GM12878 (cell line): ENCODE measurements at regions of chr10 and their contacts with region 1.

Region 1: DNA sequence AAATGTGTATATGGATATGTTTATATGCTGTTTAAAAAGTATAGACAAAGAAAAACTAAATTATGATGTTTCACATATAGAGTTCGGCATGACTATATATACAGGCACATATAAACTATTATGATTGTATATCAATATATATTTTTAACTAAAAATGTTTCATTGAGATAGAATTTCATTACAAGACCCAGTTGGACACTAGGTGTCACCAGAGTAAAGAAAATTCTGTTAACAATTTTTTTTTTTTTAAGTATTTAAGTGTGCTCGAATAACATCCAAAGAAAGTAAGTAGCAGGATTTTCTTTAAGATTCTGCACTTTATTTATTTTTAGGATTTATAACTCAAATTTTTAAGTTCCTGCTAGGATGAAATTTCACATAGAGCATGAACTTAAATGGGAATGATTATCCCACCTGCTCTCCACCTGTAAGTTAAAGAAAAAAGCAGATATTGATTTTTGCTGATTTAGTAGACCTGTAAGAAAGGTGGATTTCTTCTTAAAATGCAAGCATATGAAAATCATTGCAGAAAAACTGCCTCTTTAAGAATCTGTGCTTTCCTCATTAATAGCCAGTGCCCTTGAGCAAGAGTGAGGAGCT is 961.5 kb downstream of the PCDH15 start:
- DNase-seq: no peak
- ATAC-seq: no peak
- H3K4me3 ChIP-seq: no peak overlapping the region
- H3K27ac ChIP-seq: no peak overlapping the region
- H3K4me1 ChIP-seq: no peaks in the 10 kb centered on the region
- H3K27me3 ChIP-seq: no peaks in the 10 kb centered on the region; a peak in 1 of 4 replicates
- CTCF ChIP-seq: peak in 2 of 3 experiments; percentile 14 to 21; a peak in 3 of 6 replicates
- EP300 ChIP-seq: no peak
- POLR2A ChIP-seq: no peak
- RAD21 ChIP-seq: peak; percentile 24; the same call in 1 of the 2 replicates

Region 2: DNA sequence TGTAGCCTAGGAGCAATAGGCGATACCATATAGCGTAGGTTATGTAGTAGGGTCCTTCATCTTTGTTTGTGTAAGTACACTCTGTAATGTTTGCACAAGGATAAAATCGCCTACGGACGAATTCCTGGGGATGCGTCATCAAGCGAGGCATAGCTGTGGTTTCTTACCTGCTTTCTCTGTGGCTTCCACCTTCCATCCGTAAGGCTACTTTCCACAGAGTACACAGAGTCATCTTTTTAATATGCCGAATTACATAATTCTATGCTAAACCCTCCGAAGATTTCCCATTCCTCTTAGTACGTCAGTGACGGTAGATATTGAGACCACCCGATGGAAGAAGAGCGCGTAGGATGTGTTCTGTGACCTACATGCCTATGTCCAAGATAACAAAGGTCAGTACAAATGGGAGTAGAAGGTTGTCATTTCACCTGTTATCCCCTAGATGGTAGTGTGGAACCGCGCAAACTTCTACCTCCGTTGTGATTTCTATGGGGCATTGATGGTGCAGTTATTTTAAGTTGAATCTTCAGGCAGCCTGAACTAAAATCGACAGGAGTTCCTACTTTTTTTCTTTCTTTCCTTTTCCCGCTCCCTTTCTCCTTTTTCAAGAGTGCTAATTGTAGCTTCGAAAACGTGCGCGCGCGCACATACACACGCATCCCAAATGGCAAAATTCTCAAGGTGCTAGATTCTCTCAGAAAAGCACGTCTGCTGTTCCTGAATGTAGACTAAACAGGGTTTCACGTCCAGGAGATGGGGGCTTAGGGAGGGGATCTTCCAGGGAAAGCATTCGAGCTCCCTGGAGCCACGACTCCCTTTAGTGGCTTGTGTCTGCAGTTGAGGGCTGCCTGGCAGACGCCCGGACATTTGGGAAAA is 955.3 kb before region 1 on chr10:
- CTCF ChIA-PET with region 1: no interaction called
- POLR2A ChIA-PET with region 1: no interaction called
- RAD21 ChIA-PET with region 1: no interaction called
- SMC1A ChIA-PET with region 1: no interaction called
- in situ Hi-C with region 1: no loop called
- intact Hi-C with region 1: loop called (anchors 10 kb)
- DNase-seq: peak; percentile 25
- ATAC-seq: peak; percentile 95
- H3K4me3 ChIP-seq: no peak overlapping the region
- H3K27ac ChIP-seq: no peak overlapping the region
- H3K4me1 ChIP-seq: no peaks in the 10 kb centered on the region
- H3K27me3 ChIP-seq: no peaks in the 10 kb centered on the region; a peak in 1 of 4 replicates
- CTCF ChIP-seq: peak; percentile 78 to 84 (median 83)
- EP300 ChIP-seq: no peak
- POLR2A ChIP-seq: no peak
- RAD21 ChIP-seq: peak; percentile 90

Region 3: DNA sequence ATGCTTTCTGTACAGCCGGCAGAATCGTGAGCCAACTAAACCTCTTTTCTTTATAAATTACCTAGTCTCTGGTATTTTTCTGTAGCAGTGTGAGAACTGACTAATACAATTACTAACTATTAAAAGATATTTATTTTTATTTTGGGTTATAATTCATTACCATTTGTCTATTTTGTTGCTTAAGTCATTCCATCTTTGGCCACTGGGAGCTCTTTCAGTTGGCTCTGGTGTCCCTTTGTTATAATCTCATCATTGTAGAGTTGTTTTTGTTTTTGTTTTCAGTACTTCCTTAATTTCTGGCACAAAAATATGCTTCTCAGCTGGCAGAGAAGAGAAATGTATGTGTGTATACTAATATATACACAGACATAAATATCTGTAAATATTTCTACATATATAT is 259.1 kb before region 1 on chr10:
- CTCF ChIA-PET with region 1: no interaction called
- POLR2A ChIA-PET with region 1: no interaction called
- RAD21 ChIA-PET with region 1: no interaction called
- SMC1A ChIA-PET with region 1: no interaction called
- in situ Hi-C with region 1: no loop called
- intact Hi-C with region 1: no loop called
- DNase-seq: no peak
- ATAC-seq: no peak
- H3K4me3 ChIP-seq: no peak overlapping the region
- H3K27ac ChIP-seq: no peak overlapping the region
- H3K4me1 ChIP-seq: no peaks in the 10 kb centered on the region
- H3K27me3 ChIP-seq: no peaks in the 10 kb centered on the region
- CTCF ChIP-seq: no peak
- EP300 ChIP-seq: no peak
- POLR2A ChIP-seq: no peak
- RAD21 ChIP-seq: no peak

Region 4: DNA sequence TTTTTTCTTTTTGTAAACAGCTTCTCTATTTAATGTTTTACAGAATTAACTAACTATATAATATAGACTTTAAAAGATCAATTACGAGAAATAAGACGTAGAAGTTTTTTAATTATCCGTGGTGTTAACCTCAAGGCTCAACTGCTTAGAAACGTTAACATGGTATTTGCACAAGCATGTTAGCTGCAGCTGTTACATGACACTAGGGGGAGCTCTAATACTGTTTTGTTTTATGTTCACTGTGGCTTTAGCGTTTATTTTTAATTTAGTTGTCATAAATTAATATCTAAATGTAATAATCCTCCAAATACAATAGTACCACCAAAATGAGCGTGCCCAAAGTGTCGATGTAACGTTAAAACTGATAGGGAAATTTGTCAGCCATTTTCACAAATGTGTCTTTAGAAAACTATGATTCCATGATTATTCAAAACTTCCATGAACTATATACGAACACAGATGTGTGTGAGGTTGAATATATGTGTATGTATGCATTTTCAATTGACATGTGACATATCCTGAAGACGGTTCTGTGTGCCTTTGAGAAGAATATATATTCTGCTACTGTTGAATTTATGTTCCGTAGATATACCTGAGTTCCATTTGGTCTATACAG is 238.2 kb before region 1 on chr10:
- CTCF ChIA-PET with region 1: no interaction called
- POLR2A ChIA-PET with region 1: no interaction called
- RAD21 ChIA-PET with region 1: no interaction called
- SMC1A ChIA-PET with region 1: no interaction called
- in situ Hi-C with region 1: no loop called
- intact Hi-C with region 1: loop called (anchors 10 kb)
- DNase-seq: no peak
- ATAC-seq: peak; percentile 79
- H3K4me3 ChIP-seq: no peak overlapping the region
- H3K27ac ChIP-seq: no peak overlapping the region
- H3K4me1 ChIP-seq: no peaks in the 10 kb centered on the region
- H3K27me3 ChIP-seq: no peaks in the 10 kb centered on the region
- CTCF ChIP-seq: peak; percentile 77 to 84 (median 78)
- EP300 ChIP-seq: no peak
- POLR2A ChIP-seq: no peak
- RAD21 ChIP-seq: peak; percentile 73

Region 5: GRCh38 chr10:53650794-53651193 is 188.7 kb before region 1 on chr10:
- CTCF ChIA-PET with region 1: no interaction called
- POLR2A ChIA-PET with region 1: no interaction called
- RAD21 ChIA-PET with region 1: no interaction called
- SMC1A ChIA-PET with region 1: no interaction called
- in situ Hi-C with region 1: no loop called
- intact Hi-C with region 1: no loop called
- DNase-seq: no peak
- ATAC-seq: no peak
- H3K4me3 ChIP-seq: no peak overlapping the region
- H3K27ac ChIP-seq: no peak overlapping the region
- H3K4me1 ChIP-seq: no peaks in the 10 kb centered on the region
- H3K27me3 ChIP-seq: no peaks in the 10 kb centered on the region
- CTCF ChIP-seq: no peak
- EP300 ChIP-seq: no peak
- POLR2A ChIP-seq: no peak
- RAD21 ChIP-seq: no peak

Region 6: GRCh38 chr10:53827261-53827660 is 12.3 kb before region 1 on chr10:
- CTCF ChIA-PET with region 1: interaction called, 4 read pairs
- POLR2A ChIA-PET with region 1: no interaction called
- RAD21 ChIA-PET with region 1: no interaction called
- SMC1A ChIA-PET with region 1: interaction called, 10 read pairs
- in situ Hi-C with region 1: no loop called
- intact Hi-C with region 1: no loop called
- DNase-seq: no peak
- ATAC-seq: no peak
- H3K4me3 ChIP-seq: no peak overlapping the region
- H3K27ac ChIP-seq: no peak overlapping the region
- H3K4me1 ChIP-seq: no peaks in the 10 kb centered on the region
- H3K27me3 ChIP-seq: no peaks in the 10 kb centered on the region
- CTCF ChIP-seq: no peak
- EP300 ChIP-seq: no peak
- POLR2A ChIP-seq: no peak
- RAD21 ChIP-seq: no peak

Region 7: DNA sequence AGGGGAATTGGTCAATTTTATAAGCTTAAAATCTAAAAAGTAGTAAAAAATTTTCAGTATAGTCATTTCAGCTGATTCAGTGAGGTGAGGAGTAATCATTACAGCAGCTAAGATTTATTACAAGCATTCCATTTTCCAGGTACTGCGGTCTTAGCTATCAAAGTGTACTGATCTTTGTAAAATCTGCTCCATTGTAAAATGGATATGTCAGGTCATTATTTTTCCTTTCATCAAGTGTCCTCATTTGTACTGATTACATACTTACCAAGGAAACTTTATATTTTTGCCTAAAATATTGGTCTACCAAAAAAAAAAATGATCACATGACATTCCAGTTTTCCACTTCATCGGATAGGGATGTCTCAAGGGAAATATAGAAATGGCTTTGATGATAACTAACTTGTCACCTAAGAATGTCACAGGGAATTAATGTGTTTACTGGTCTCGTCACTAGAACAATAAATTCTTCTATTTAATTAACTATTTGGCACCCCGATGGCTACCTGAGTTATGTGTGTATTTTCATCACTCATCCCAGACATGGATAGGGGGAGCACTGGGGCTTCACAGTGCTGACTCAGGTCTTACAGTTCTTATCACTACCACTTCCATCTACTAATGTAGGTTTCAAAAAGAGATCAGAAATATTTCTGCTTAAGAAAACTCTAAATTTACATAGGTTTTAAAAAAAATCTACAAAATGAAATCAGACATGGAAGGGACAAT is 13.1 kb after region 1 on chr10:
- CTCF ChIA-PET with region 1: interaction called, 14 read pairs
- POLR2A ChIA-PET with region 1: no interaction called
- RAD21 ChIA-PET with region 1: no interaction called
- SMC1A ChIA-PET with region 1: no interaction called
- in situ Hi-C with region 1: no loop called
- intact Hi-C with region 1: no loop called
- DNase-seq: no peak
- ATAC-seq: no peak
- H3K4me3 ChIP-seq: no peak overlapping the region
- H3K27ac ChIP-seq: no peak overlapping the region
- H3K4me1 ChIP-seq: no peaks in the 10 kb centered on the region
- H3K27me3 ChIP-seq: no peaks in the 10 kb centered on the region
- CTCF ChIP-seq: no peak
- EP300 ChIP-seq: no peak
- POLR2A ChIP-seq: no peak
- RAD21 ChIP-seq: no peak

Region 8: GRCh38 chr10:54402576-54402975 is 563.0 kb after region 1 on chr10:
- CTCF ChIA-PET with region 1: interaction called, 14 read pairs
- POLR2A ChIA-PET with region 1: interaction called, 4 read pairs
- RAD21 ChIA-PET with region 1: interaction called, 5 read pairs
- SMC1A ChIA-PET with region 1: interaction called, 3 read pairs
- in situ Hi-C with region 1: no loop called
- intact Hi-C with region 1: loop called (anchors 2 kb)
- DNase-seq: no peak
- ATAC-seq: no peak
- H3K4me3 ChIP-seq: no peak overlapping the region
- H3K27ac ChIP-seq: no peak overlapping the region
- H3K4me1 ChIP-seq: no peaks in the 10 kb centered on the region
- H3K27me3 ChIP-seq: no peaks in the 10 kb centered on the region
- CTCF ChIP-seq: peak; percentile 20 to 44 (median 44); a peak in 5 of 6 replicates
- EP300 ChIP-seq: no peak
- POLR2A ChIP-seq: no peak
- RAD21 ChIP-seq: peak; percentile 61

Region 9: GRCh38 chr10:55263327-55263726 is 1423.8 kb after region 1 on chr10:
- CTCF ChIA-PET with region 1: interaction called, 3 read pairs
- POLR2A ChIA-PET with region 1: no interaction called
- RAD21 ChIA-PET with region 1: no interaction called
- SMC1A ChIA-PET with region 1: no interaction called
- in situ Hi-C with region 1: no loop called
- intact Hi-C with region 1: loop called (anchors 2 kb)
- DNase-seq: no peak
- ATAC-seq: peak; percentile 17; the same call in 1 of the 3 replicates
- H3K4me3 ChIP-seq: no peak overlapping the region
- H3K27ac ChIP-seq: no peak overlapping the region
- H3K4me1 ChIP-seq: no peaks in the 10 kb centered on the region
- H3K27me3 ChIP-seq: 0 out of 4 replicates have a peak, but pooled peaks cover 0 to 2% of the 10 kb centered on the region in 2 experiments
- CTCF ChIP-seq: no peak
- EP300 ChIP-seq: no peak
- POLR2A ChIP-seq: no peak
- RAD21 ChIP-seq: no peak